GM10248 (cell line): ENCODE measurements at regions of chr11 and their contacts with region 1.

Region 1: GRCh38 chr11:27296497-27296896 is 66.5 kb downstream of the CCDC34 start:
- DNase-seq: peak; percentile 43
- CTCF ChIP-seq: peak; percentile 47

Region 2: GRCh38 chr11:27153136-27153535 is 143.4 kb before region 1 on chr11:
- CTCF ChIA-PET with region 1: no interaction called
- POLR2A ChIA-PET with region 1: no interaction called
- DNase-seq: no peak
- CTCF ChIP-seq: no peak

Region 3: GRCh38 chr11:27183672-27184457 is 112.6 kb before region 1 on chr11:
- CTCF ChIA-PET with region 1: interaction called, 14 read pairs
- POLR2A ChIA-PET with region 1: no interaction called
- DNase-seq: peak; percentile 22
- CTCF ChIP-seq: peak; percentile 51

Region 4: GRCh38 chr11:27281740-27282590 is 14.5 kb before region 1 on chr11:
- CTCF ChIA-PET with region 1: interaction called, 22 read pairs
- POLR2A ChIA-PET with region 1: no interaction called
- DNase-seq: no peak
- CTCF ChIP-seq: no peak

Region 5: GRCh38 chr11:27315836-27316235 is 19.3 kb after region 1 on chr11:
- CTCF ChIA-PET with region 1: interaction called, 21 read pairs
- POLR2A ChIA-PET with region 1: no interaction called
- DNase-seq: no peak
- CTCF ChIP-seq: no peak